ENCODE measurements at regions of chr3 and their contacts with region 1.

Region 1: DNA sequence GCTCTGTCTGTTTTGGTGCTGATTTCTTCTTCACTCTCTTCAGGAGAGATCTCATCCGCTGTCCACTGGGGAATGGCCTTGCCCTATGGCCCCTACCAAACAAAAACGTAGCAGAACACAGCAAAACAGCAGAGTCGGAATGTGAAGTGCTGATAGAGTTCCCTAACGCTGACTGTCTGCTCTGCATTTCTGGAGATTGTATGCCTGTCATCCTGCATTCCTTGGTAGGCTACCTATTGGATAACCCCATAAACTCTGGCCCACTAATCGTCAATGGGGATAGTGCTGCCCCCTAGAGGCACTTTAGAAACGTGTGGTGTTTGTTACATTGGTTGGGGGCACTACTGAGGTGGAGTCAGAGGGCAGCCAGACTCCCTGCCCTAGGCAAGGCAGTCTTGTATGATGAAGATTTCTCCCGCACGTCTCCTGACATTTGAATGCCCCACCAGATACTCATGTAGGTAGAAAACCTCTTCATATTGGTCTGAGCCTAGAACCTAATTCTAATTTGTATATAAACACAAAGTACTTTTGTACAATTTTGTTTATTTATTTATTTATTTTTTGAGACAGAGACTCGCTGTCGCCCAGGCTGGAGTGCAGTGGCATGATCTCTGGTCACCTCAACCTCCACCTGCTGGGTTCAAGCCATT is 15.6 kb upstream of the MAGEF1 start:
- DNase-seq: peak; percentile 74 to 78
- H3K4me3 ChIP-seq: no peak overlapping the region
- H3K27ac ChIP-seq: no peak overlapping the region
- H3K4me1 ChIP-seq: no peaks in the 10 kb centered on the region; a peak in 1 of 7 replicates
- H3K27me3 ChIP-seq: peaks cover 0 to 3% (median 0%) of the 10 kb centered on the region in 4 experiments; a peak in 3 of 7 replicates
- CTCF ChIP-seq: peak; percentile 58 to 97 (median 95)
- EP300 ChIP-seq: no peak
- POLR2A ChIP-seq: no peak
- RAD21 ChIP-seq: peak; percentile 85 to 93

Region 2: GRCh38 chr3:184691397-184692231 is 35.9 kb before region 1 on chr3:
- CTCF ChIA-PET with region 1: interaction called, 13 read pairs
- POLR2A ChIA-PET with region 1: no interaction called
- DNase-seq: no peak
- H3K4me3 ChIP-seq: no peak overlapping the region
- H3K27ac ChIP-seq: no peak overlapping the region
- H3K4me1 ChIP-seq: peaks cover 2 to 8% (median 4%) of the 10 kb centered on the region in 4 experiments; a peak in 4 of 7 replicates
- H3K27me3 ChIP-seq: peaks cover 0 to 3% (median 0%) of the 10 kb centered on the region in 4 experiments; a peak in 1 of 7 replicates
- CTCF ChIP-seq: no peak
- EP300 ChIP-seq: no peak
- POLR2A ChIP-seq: no peak
- RAD21 ChIP-seq: no peak

Region 3: GRCh38 chr3:184740524-184741484 is 13.3 kb after region 1 on chr3:
- CTCF ChIA-PET with region 1: interaction called, 100 read pairs
- POLR2A ChIA-PET with region 1: interaction called, 3 read pairs
- DNase-seq: no peak
- H3K4me3 ChIP-seq: no peak overlapping the region
- H3K27ac ChIP-seq: no peak overlapping the region
- H3K4me1 ChIP-seq: peaks cover 0 to 3% (median 1%) of the 10 kb centered on the region in 4 experiments; a peak in 1 of 7 replicates
- H3K27me3 ChIP-seq: no peaks in the 10 kb centered on the region
- CTCF ChIP-seq: no peak
- EP300 ChIP-seq: no peak
- POLR2A ChIP-seq: no peak
- RAD21 ChIP-seq: no peak

Region 4: DNA sequence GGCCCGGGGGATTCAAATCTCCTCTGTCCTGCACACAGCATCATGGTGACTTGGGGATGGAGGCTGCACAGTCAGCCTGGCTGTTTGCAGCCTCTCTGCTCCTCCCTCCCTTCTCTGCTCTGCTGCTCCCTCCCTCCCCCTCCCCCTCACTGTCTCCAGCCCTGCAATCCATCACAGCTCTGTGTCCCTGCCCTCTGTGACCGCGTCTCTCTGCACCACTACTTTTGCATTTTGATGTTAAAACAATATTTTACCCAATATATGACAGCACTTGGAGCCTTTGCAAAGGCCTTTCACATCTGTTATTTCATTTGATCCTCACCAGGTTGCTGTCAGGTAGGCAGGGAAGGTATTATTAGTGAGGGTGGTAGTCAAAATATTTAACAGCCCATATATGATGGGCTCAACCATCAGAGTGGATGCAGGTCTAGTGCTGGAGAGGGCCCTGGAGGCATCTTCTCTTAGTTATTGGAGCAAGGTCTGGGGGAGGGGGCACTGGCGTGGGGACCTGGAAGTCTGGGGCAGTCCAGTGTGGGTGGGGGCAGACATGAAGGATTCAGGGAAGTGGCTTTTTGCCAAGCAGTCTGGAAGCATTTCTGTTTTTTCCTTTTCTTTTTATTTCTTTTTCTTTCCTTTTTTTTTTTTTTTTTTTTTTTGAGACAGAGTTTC is 68.2 kb after region 1 on chr3:
- CTCF ChIA-PET with region 1: interaction called, 19 read pairs
- POLR2A ChIA-PET with region 1: no interaction called
- DNase-seq: no peak
- H3K4me3 ChIP-seq: no peak overlapping the region
- H3K27ac ChIP-seq: no peak overlapping the region
- H3K4me1 ChIP-seq: peaks cover 0 to 2% (median 0%) of the 10 kb centered on the region in 4 experiments; a peak in 4 of 7 replicates
- H3K27me3 ChIP-seq: no peaks in the 10 kb centered on the region
- CTCF ChIP-seq: no peak
- EP300 ChIP-seq: no peak
- POLR2A ChIP-seq: no peak
- RAD21 ChIP-seq: no peak

Region 5: DNA sequence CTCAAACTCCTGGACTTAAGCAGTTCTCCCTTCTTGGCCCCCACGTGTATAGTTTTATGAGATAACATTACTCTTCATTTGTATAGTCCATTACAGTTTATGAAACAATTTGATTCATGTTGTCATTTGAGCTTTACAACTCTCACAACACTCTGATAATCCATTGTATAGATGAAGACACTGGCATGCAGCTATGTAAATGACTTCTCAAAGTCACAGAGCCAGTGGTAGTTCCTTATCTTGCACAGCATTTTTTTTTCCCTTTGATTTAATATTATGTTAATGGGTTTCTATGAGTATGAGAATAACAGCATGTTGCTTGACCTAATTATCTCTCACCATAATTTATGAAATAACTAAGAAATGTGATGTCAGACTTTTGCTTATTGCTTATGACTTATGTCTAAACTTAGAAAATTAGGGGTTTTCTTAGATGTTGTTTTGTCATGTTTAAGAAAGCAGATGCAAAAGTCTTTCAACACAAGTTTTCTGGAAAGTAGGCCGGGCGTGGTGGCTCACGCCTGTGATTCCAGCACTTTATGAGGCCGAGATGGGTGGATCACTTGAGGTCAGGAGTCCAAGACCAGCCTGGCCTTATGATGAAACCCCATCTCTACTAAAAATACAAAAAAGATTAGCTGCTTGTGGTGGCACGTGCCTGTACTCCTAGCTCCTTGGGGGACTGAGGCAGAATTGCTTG is 97.8 kb after region 1 on chr3:
- CTCF ChIA-PET with region 1: no interaction called
- POLR2A ChIA-PET with region 1: no interaction called
- DNase-seq: no peak
- H3K4me3 ChIP-seq: no peak overlapping the region
- H3K27ac ChIP-seq: no peak overlapping the region
- H3K4me1 ChIP-seq: no peaks in the 10 kb centered on the region
- H3K27me3 ChIP-seq: no peaks in the 10 kb centered on the region
- CTCF ChIP-seq: no peak
- EP300 ChIP-seq: no peak
- POLR2A ChIP-seq: no peak
- RAD21 ChIP-seq: no peak